Thyroid gland (tissue), 4 donors: ENCODE measurements at regions of chr17 and their contacts with region 1.

Region 1: GRCh38 chr17:79188048-79188447 is 113.4 kb downstream of the ENGASE start:
- DNase-seq: peak; percentile 26 to 32
- H3K4me3 ChIP-seq: no peak overlapping the region
- H3K27ac ChIP-seq: no peak overlapping the region
- H3K4me1 ChIP-seq: no peaks in the 10 kb centered on the region
- H3K27me3 ChIP-seq: no peaks in the 10 kb centered on the region
- CTCF ChIP-seq: peak in 5 of 6 experiments; percentile 29 to 59 (median 53)
- POLR2A ChIP-seq: no peak

Region 2: GRCh38 chr17:78979780-78980623 is 208.0 kb before region 1 on chr17 and contains the start of gene LGALS3BP:
- intact Hi-C with region 1: no loop called
- DNase-seq: peak; percentile 84 to 89
- H3K4me3 ChIP-seq: peak within 1 kb of the TSS in 1 of 3 donors; percentile 27
- H3K27ac ChIP-seq: peak within 1 kb of the TSS; percentile 57 to 73 (median 63)
- H3K4me1 ChIP-seq: peaks cover 35 to 53% of the 10 kb centered on the region in 2 donors
- H3K27me3 ChIP-seq: no peaks in the 10 kb centered on the region
- CTCF ChIP-seq: no peak
- POLR2A ChIP-seq: peak in 1 of 2 donors; percentile 43
- total RNA-seq, gene LGALS3BP: 193 to 443 (median 390) TPM

Region 3: DNA sequence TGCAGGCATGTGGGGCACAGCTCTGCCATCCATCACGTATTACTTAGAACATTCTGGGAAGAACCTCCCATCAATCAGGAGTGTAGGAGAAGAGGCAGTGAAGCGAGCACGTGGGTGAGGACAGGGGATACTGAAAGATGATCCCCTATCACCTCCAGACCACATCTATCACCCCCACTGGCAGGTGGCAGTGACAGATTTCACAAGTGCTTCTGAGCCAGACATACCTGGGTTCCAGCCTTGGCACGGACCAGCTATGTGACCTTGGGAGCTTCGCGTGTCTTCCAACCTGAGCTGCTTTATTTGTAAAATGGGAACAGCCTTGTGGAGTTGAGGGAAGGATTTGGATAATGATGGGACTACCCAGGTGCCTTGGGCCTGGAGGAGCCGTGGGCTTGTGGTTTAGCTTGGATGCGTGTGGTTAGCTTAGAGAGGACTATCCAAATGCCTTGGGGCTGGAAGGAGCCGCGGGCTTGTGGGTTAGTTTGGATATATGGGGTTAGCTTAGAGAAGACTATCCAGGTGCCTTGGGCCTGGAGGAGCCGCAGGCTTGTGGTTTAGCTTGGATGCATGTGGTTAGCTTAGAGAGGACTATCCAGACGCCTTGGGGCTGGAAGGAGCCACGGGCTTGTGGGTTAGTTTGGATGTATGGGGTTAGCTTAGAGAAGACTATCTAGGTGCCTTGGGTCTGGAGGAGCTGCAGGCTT is 93.0 kb after region 1 on chr17:
- intact Hi-C with region 1: loop called (anchors 10 kb)
- DNase-seq: no peak
- H3K4me3 ChIP-seq: no peak overlapping the region
- H3K27ac ChIP-seq: no peak overlapping the region
- H3K4me1 ChIP-seq: no peaks in the 10 kb centered on the region
- H3K27me3 ChIP-seq: no peaks in the 10 kb centered on the region
- CTCF ChIP-seq: no peak
- POLR2A ChIP-seq: no peak

Region 4: DNA sequence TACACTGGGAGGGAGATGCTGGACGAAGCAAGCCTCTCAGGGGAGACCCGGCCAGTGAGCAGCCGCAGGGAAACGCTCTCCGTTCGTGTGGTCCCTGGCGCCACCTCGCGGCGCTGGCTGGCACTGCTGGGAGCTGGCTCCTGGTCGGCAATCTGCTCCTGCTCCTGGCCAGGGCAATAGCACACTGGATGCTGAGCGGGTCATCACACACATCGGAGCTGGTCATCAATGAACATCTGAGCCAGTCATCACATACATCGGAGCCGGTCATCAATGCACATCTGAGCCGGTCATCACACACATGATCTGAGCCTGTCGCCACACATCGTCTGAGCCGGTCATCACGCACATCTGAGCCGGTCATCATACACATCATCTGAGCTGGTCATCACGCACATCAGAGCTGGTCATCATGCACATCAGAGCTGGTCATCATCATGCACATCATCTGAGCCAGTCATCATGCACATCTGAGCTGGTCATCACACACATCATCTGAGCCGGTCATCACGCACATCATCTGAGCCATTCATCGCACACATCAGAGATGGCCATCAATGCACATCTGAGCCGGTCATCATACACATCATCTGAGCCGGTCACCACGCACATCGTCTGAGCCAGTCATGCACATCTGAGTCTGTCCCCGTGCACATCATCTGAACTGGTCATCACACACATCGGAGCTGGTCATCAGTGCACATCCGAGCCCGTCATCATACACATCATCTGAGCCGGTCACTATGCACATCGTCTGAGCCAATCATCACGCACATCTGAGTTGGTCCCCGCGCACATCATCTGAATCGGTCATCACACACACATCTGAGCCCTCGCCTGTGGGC is 205.5 kb after region 1 on chr17:
- intact Hi-C with region 1: loop called (anchors 2 kb)
- DNase-seq: peak; percentile 81 to 82
- H3K4me3 ChIP-seq: no peak overlapping the region
- H3K27ac ChIP-seq: no peak overlapping the region
- H3K4me1 ChIP-seq: no peaks in the 10 kb centered on the region
- H3K27me3 ChIP-seq: peaks cover 7% of the 10 kb centered on the region
- CTCF ChIP-seq: peak; percentile 66 to 99 (median 92)
- POLR2A ChIP-seq: no peak